CD4-positive, alpha-beta T cell (primary cell): ENCODE measurements at regions of chr6 and their contacts with region 1.

Region 1: DNA sequence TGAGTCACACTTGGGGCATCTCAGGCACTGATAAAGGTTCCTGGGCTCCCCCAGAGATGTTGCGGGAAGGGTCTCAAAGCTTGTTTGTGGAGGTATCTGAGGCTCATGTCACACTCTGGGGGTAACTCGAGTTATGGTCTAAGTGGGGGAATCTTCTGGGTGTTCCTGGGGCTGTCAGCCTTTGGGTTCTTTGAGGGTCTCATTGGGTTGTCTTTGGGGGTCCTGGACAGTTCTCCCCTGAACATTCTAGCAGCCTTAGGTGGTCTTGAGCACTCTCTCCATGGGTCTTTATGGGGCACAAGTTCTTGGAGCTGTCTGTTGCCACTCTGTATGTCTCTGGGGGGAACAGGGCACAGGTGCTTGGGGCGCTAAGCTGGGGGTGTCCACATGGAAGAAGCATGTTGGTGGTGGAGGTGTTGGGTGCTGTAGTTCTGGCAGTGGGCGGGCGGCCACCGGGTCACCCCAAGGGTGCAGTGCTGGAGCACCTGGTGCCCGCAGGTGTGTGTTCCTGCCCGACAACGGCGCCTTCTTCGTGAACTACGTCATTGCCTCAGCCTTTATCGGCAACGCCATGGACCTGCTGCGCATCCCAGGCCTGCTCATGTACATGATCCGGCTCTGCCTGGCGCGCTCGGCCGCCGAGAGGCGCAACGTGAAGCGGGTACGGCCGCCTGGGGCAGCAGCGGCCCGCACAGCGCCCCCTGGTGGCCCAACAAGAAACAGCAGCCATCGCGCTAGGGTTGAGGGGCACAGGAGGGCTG is 7.1 kb upstream of the CAPN11 start:
- DNase-seq: peak; percentile 64 to 88 (median 76)
- ATAC-seq: peak; percentile 92
- H3K4me3 ChIP-seq: no peak overlapping the region
- H3K4me3 Mint-ChIP-seq: no peak overlapping the region
- H3K27ac ChIP-seq: no peak overlapping the region
- H3K27ac Mint-ChIP-seq: no peak overlapping the region
- H3K4me1 ChIP-seq: peaks cover 16% of the 10 kb centered on the region
- H3K4me1 Mint-ChIP-seq: peaks cover 4% of the 10 kb centered on the region
- H3K27me3 ChIP-seq: no peaks in the 10 kb centered on the region
- H3K27me3 Mint-ChIP-seq: no peaks in the 10 kb centered on the region
- CTCF ChIP-seq: peak; percentile 98

Region 2: GRCh38 chr6:44179072-44179536 is 27.6 kb after region 1 on chr6:
- CTCF ChIA-PET with region 1: no interaction called
- POLR2A ChIA-PET with region 1: no interaction called
- intact Hi-C with region 1: no loop called
- DNase-seq: no peak
- ATAC-seq: no peak
- H3K4me3 ChIP-seq: no peak overlapping the region
- H3K4me3 Mint-ChIP-seq: no peak overlapping the region
- H3K27ac ChIP-seq: no peak overlapping the region
- H3K27ac Mint-ChIP-seq: no peak overlapping the region
- H3K4me1 ChIP-seq: peaks cover 9% of the 10 kb centered on the region
- H3K4me1 Mint-ChIP-seq: no peaks in the 10 kb centered on the region
- H3K27me3 ChIP-seq: peaks cover 0 to 2% of the 10 kb centered on the region in 2 experiments
- H3K27me3 Mint-ChIP-seq: no peaks in the 10 kb centered on the region
- CTCF ChIP-seq: no peak

Region 3: GRCh38 chr6:44338228-44339122 is 186.9 kb after region 1 on chr6:
- CTCF ChIA-PET with region 1: no interaction called
- POLR2A ChIA-PET with region 1: no interaction called
- intact Hi-C with region 1: loop called (anchors 1 kb)
- DNase-seq: peak; percentile 36 to 81 (median 55)
- ATAC-seq: peak; percentile 91
- H3K4me3 ChIP-seq: no peak overlapping the region
- H3K4me3 Mint-ChIP-seq: no peak overlapping the region
- H3K27ac ChIP-seq: no peak overlapping the region
- H3K27ac Mint-ChIP-seq: no peak overlapping the region
- H3K4me1 ChIP-seq: peaks cover 8% of the 10 kb centered on the region
- H3K4me1 Mint-ChIP-seq: no peaks in the 10 kb centered on the region
- H3K27me3 ChIP-seq: peaks cover 21 to 26% of the 10 kb centered on the region in 2 experiments
- H3K27me3 Mint-ChIP-seq: peaks cover 33% of the 10 kb centered on the region
- CTCF ChIP-seq: peak; percentile 69

Region 4: GRCh38 chr6:44627091-44627878 is 475.8 kb after region 1 on chr6:
- CTCF ChIA-PET with region 1: no interaction called
- POLR2A ChIA-PET with region 1: no interaction called
- intact Hi-C with region 1: no loop called
- DNase-seq: peak in 4 of 14 experiments; percentile 10 to 55 (median 25)
- ATAC-seq: peak; percentile 39
- H3K4me3 ChIP-seq: no peak overlapping the region
- H3K4me3 Mint-ChIP-seq: peak overlapping the region; percentile 57
- H3K27ac ChIP-seq: no peak overlapping the region
- H3K27ac Mint-ChIP-seq: peak overlapping the region; percentile 59
- H3K4me1 ChIP-seq: peaks cover 17% of the 10 kb centered on the region
- H3K4me1 Mint-ChIP-seq: peaks cover 32% of the 10 kb centered on the region
- H3K27me3 ChIP-seq: no peaks in the 10 kb centered on the region
- H3K27me3 Mint-ChIP-seq: no peaks in the 10 kb centered on the region
- CTCF ChIP-seq: no peak